ENCODE measurements at regions of chr3 and their contacts with region 1.

Region 1: DNA sequence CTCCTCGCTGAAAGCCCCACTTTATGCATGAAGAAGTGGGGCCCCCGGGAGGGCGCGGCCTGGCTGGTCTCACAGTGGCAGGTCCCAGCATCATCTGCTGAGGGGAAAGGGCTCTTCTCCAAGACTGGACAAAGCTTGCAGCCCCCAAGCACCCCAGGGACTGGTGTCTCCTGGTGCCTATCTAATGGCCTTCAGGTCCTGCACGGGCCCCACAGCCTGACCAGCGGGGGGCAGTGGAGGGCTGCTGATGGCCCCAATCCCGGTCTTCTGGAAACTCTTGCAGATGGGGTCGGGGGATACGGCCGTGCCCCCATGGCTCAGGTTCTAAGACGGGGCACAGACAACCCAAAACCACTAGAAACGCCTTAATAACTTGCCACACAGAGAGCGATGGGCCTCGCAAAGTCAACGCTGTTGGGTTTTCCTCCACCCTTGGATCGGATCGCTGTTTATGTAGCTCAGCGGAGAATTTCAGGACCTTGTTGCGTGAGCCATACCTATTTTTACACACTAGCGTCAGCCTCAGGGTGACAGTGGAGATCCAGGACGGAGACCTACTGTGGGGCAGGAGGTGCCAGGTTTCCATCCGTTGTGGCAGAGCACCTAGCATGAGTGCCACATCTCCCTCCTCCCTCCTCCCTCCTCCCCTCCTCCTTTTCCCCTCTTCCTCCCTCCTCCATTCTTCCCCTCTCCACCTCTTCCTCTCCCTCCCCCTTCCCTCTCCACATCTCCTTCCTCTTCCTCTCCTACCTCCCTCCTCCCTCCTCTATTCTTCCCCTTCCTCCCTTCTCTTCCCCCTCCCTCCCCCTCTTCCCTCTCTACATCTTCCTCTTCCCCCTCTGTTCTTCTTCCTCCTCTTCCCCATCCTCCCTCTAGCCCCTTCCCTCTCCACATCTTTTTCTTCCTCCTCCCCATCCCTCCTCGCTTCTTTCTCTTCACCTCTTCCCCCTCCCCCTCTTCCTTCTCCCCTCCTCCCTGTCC is 79.3 kb upstream of the ALDH1L1 start:
- DNase-seq: peak; percentile 74
- H3K4me3 ChIP-seq: peak overlapping the region; percentile 56
- H3K27ac ChIP-seq: peak overlapping the region; percentile 82
- H3K4me1 ChIP-seq: peaks cover 8% of the 10 kb centered on the region
- H3K27me3 ChIP-seq: no peaks in the 10 kb centered on the region
- CTCF ChIP-seq: peak; percentile 83

Region 2: DNA sequence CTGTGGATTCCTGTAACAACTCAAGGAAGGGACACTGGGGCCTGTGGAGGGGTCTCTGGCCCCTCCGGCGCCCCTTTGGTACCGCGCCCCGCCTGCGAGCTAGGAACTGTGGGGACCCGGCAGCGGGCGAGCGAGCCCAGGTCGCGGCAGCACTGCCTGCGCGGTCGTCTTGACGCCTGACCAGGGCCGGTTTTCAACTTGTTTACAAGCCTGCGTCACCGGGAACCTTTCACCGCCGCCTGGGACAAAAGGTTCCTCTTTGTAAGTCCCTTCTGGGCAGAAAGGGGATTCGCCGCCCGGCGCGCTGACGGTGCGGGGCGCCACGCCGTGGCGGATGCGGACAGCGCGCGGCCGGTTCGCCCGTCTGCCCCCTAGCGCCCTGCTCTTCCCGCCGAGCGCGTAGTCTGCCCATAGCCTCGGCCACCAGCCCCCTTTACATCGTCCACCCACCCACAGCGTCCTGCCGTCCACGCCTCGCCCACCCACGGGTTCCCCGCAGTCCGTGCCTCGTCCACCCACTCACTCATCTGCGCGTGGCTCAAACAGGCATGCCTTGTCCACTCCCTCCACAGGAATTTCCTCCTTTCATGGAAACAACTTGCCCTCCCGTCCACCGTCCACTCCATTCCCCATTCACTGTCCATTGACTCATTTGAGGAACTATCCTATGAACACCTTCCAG is 129.6 kb after region 1 on chr3:
- intact Hi-C with region 1: loop called (anchors 5 kb)
- DNase-seq: peak; percentile 90
- H3K4me3 ChIP-seq: peak overlapping the region; percentile 65
- H3K27ac ChIP-seq: peak overlapping the region; percentile 91
- H3K4me1 ChIP-seq: peaks cover 11% of the 10 kb centered on the region
- H3K27me3 ChIP-seq: peaks cover 22% of the 10 kb centered on the region
- CTCF ChIP-seq: peak; percentile 96